B cell (primary cell): ENCODE measurements at regions of chr10 and their contacts with region 1.

Region 1: GRCh38 chr10:102444851-102445250 is 6.5 kb downstream of the C10orf95 start:
- DNase-seq: no peak
- ATAC-seq: no peak
- H3K4me3 ChIP-seq: no peak overlapping the region
- H3K4me3 Mint-ChIP-seq: no peak overlapping the region
- H3K27ac ChIP-seq: no peak overlapping the region
- H3K27ac Mint-ChIP-seq: no peak overlapping the region
- H3K4me1 ChIP-seq: peaks cover 4 to 6% of the 10 kb centered on the region in 2 donors
- H3K4me1 Mint-ChIP-seq: peaks cover 7% of the 10 kb centered on the region
- H3K27me3 ChIP-seq: no peaks in the 10 kb centered on the region
- H3K27me3 Mint-ChIP-seq: no peaks in the 10 kb centered on the region
- CTCF ChIP-seq: no peak

Region 2: DNA sequence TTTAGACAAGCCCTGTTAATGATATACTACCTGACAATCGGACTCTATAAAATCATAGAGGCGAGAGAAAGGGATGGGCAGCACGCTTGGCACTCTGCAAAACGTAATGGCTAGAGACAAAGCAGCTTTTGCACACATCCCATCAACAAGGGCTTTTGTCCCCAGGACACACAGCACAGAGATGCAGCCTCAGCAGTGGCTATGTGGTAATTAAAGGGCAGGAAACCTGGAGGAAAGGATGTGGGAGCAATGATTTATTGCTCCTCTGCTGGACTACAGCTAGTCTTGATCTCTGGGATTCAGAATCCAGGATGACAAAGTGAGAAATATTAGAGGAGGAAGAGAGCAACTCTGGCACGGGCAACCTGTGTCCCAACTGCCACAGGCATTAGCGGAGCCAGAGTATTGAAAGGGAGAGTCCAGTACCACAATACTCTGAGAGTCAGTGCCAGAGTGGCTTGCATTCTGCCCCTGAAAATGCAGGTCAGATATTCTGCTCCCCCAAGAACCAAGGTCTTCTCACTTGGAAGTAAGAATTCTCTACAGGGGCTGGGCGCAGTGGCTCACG is 485.4 kb before region 1 on chr10:
- CTCF ChIA-PET with region 1: no interaction called
- POLR2A ChIA-PET with region 1: interaction called, 11 read pairs
- intact Hi-C with region 1: no loop called
- DNase-seq: no peak
- ATAC-seq: no peak
- H3K4me3 ChIP-seq: no peak overlapping the region
- H3K4me3 Mint-ChIP-seq: no peak overlapping the region
- H3K27ac ChIP-seq: peak overlapping the region in 1 of 2 donors; percentile 73
- H3K27ac Mint-ChIP-seq: peak overlapping the region; percentile 57
- H3K4me1 ChIP-seq: peaks cover 14 to 29% of the 10 kb centered on the region in 2 donors
- H3K4me1 Mint-ChIP-seq: peaks cover 46% of the 10 kb centered on the region
- H3K27me3 ChIP-seq: no peaks in the 10 kb centered on the region
- H3K27me3 Mint-ChIP-seq: no peaks in the 10 kb centered on the region
- CTCF ChIP-seq: no peak